ENCODE measurements at regions of chr11 and their contacts with region 1.

Region 1: GRCh38 chr11:77127232-77127911 is 674 bp upstream of the MYO7A start:
- DNase-seq: peak; percentile 66
- H3K4me3 Mint-ChIP-seq: peak overlapping the region; percentile 51
- H3K27ac Mint-ChIP-seq: no peak overlapping the region
- H3K4me1 Mint-ChIP-seq: peaks cover 9% of the 10 kb centered on the region
- H3K27me3 Mint-ChIP-seq: peaks cover 28% of the 10 kb centered on the region

Region 2: GRCh38 chr11:77113382-77114088 is 13.8 kb before region 1 on chr11:
- CTCF ChIA-PET with region 1: interaction called, 15 read pairs
- DNase-seq: peak; percentile 58
- H3K4me3 Mint-ChIP-seq: no peak overlapping the region
- H3K27ac Mint-ChIP-seq: no peak overlapping the region
- H3K4me1 Mint-ChIP-seq: peaks cover 2% of the 10 kb centered on the region
- H3K27me3 Mint-ChIP-seq: peaks cover 7% of the 10 kb centered on the region

Region 3: DNA sequence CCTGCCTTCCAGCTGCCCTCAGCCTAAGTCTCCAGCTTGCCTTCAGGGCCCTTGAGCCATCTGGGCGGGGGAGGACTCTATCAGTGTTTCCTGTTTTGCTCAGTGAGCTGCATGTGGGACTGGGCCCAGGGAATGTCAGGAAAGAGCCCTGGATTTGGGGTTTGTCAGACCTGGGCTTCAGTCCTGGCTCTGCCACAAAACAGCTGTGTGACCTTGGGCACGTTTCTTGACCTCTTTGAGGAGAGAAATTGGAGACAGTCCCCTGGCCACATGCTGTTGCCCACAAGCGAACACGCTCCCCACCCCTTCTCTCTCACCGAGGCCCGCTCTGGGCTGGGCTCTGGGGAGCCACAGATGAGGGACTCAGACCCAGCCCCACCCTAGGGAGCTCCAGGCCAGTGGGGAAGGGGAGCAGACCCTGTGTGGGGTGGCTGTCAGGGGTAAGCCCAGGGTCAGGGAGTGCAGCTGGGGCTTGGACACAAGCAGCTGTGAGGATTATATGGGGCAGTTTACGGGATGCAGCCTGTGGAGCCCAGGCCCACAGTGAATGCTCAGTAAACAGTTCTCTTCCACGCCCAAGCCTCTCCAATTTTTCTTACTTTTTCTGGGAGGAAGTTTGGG is 13.0 kb after region 1 on chr11:
- CTCF ChIA-PET with region 1: interaction called, 20 read pairs
- DNase-seq: no peak
- H3K4me3 Mint-ChIP-seq: no peak overlapping the region
- H3K27ac Mint-ChIP-seq: no peak overlapping the region
- H3K4me1 Mint-ChIP-seq: peaks cover 11% of the 10 kb centered on the region
- H3K27me3 Mint-ChIP-seq: peaks cover 68% of the 10 kb centered on the region

Region 4: DNA sequence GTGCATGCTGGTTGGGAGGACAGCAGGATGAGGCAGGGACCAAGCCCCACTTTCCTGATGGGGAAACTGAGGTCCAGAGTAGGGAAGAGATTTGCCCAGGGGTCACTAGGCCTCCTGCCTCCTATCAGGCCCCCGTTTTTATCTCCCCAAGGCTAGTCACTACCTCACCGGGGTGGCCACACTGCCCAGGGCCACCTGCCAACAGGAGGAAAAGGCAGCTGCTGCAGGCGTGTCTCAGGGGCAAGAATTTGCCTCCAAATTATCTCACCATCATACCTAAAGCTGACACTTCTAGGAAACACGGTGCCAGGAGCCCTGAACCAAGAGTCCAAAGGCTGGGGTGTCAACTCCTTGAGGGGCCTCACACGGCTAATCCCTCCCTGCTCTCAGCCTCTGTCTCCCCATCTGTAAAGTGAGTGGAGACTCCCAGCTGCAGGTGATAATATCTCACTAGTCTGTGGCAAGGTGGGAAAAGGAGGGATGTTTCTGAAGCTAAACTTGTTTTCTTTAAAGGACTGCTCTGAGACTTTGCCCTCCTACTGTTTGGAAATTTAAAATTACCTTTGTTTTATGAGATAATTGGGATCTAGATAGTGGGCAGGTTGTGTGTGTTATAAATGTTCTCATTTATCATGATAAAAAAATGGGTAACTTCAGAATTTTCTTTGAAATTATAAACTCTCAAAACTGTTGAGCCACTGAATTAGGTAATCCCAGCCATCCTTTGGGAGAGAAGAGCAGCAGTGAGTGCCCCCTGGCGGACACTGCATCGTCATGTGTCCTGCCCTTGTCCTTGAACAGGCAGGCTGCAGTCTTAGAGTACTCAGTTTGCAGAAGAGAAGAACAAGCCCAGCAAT is 60.6 kb after region 1 on chr11:
- CTCF ChIA-PET with region 1: interaction called, 111 read pairs
- DNase-seq: peak; percentile 78
- H3K4me3 Mint-ChIP-seq: no peak overlapping the region
- H3K27ac Mint-ChIP-seq: no peak overlapping the region
- H3K4me1 Mint-ChIP-seq: no peaks in the 10 kb centered on the region
- H3K27me3 Mint-ChIP-seq: peaks cover 3% of the 10 kb centered on the region

Region 5: DNA sequence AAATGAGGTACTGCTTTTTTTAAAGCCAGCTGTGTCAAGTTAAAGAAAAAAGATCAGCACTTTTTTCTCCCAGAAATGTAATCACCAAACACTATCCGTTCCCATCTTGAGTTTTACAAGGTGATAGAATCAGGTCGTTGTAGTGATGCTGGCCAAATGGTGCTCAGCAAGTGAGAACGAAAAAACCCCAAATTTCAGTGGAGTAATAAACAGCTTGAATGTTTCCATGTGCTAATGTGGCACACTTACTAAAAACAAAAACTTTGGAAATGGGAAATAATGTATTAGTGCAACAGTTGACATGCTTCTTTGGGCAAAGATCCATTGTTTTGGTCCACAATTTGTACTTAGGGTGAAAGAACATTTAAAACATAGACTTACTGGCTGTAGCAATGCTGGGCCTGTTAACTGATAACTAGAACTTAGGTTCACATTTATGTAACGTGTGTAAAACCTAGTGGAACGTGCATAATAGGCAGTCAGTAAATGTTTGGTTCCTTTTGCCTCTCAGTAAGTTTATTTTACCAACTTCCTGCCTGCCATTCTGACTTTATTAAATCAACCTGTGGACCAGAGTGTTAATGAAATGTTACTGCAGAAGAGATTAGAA is 189.5 kb after region 1 on chr11:
- CTCF ChIA-PET with region 1: no interaction called
- DNase-seq: no peak
- H3K4me3 Mint-ChIP-seq: no peak overlapping the region
- H3K27ac Mint-ChIP-seq: no peak overlapping the region
- H3K4me1 Mint-ChIP-seq: no peaks in the 10 kb centered on the region
- H3K27me3 Mint-ChIP-seq: peaks cover 8% of the 10 kb centered on the region

Region 6: GRCh38 chr11:77547863-77548551 is 420.6 kb after region 1 on chr11:
- CTCF ChIA-PET with region 1: interaction called, 22 read pairs
- DNase-seq: peak; percentile 48
- H3K4me3 Mint-ChIP-seq: no peak overlapping the region
- H3K27ac Mint-ChIP-seq: no peak overlapping the region
- H3K4me1 Mint-ChIP-seq: no peaks in the 10 kb centered on the region
- H3K27me3 Mint-ChIP-seq: peaks cover 4% of the 10 kb centered on the region

Region 7: GRCh38 chr11:77619576-77620198 is 492.3 kb after region 1 on chr11:
- CTCF ChIA-PET with region 1: interaction called, 13 read pairs
- DNase-seq: no peak
- H3K4me3 Mint-ChIP-seq: no peak overlapping the region
- H3K27ac Mint-ChIP-seq: no peak overlapping the region
- H3K4me1 Mint-ChIP-seq: no peaks in the 10 kb centered on the region
- H3K27me3 Mint-ChIP-seq: no peaks in the 10 kb centered on the region

Measured in activated naive CD4-positive, alpha-beta T cell treated with anti-CD3 and anti-CD28 coated beads, Interleukin-2, amount 10 ng/mL, durations not matched to agents 7 days and 5 days (primary cell).